ENCODE measurements at regions of chr9 and their contacts with region 1.

Region 1: GRCh38 chr9:114900942-114901802 is 29.2 kb downstream of the TNFSF8 start:
- DNase-seq: no peak
- H3K4me3 Mint-ChIP-seq: peak overlapping the region; percentile 39
- H3K27ac Mint-ChIP-seq: peak overlapping the region; percentile 73
- H3K4me1 Mint-ChIP-seq: peaks cover 60% of the 10 kb centered on the region
- H3K27me3 Mint-ChIP-seq: no peaks in the 10 kb centered on the region

Region 2: DNA sequence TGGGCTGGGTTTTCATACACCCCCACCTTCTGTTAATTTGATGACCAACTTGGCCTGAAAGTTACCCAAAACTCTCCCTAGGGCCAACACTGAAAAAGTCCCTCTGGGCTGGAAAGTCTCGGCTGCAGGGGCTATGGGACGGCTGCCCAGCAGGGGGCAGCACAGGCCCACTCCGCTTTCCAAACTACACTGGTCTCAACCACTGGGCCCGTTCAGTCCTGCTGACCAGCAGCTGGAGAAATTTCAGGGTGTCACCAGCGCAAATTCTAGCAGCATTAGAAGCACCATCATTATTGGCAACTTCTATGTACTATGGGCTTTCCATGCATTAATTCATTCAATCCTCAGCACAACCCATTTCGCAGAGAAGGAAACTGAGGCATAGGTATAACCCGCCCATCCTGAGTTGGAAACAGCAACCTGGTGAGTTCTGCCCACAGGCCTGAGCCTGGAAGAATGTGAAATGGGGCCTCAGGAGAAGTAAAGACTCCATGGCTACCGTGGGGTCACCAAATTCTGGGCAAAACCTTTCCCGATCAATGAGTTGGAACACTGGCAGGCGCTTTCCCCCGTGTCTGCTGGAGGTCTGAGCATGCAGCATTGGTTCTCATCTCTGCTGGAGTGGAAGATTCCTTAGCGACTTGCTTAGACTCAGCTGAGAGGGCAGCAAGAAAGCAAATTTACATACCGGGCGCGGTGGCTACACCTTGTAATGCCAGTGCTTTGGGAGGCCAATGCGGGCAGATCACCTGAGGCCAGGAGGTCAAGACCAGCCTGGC is 561.9 kb before region 1 on chr9:
- intact Hi-C with region 1: no loop called
- DNase-seq: peak; percentile 84
- H3K4me3 Mint-ChIP-seq: no peak overlapping the region
- H3K27ac Mint-ChIP-seq: no peak overlapping the region
- H3K4me1 Mint-ChIP-seq: peaks cover 13% of the 10 kb centered on the region
- H3K27me3 Mint-ChIP-seq: no peaks in the 10 kb centered on the region

Region 3: GRCh38 chr9:114880291-114880751 is 20.9 kb before region 1 on chr9:
- intact Hi-C with region 1: loop called (anchors 2 kb)
- DNase-seq: no peak
- H3K4me3 Mint-ChIP-seq: no peak overlapping the region
- H3K27ac Mint-ChIP-seq: no peak overlapping the region
- H3K4me1 Mint-ChIP-seq: no peaks in the 10 kb centered on the region
- H3K27me3 Mint-ChIP-seq: no peaks in the 10 kb centered on the region